ENCODE measurements at regions of chr11 and their contacts with region 1.

Region 1: GRCh38 chr11:35549787-35550186 is 24.4 kb upstream of the PAMR1 start:
- DNase-seq: peak; percentile 69 to 81
- H3K4me3 ChIP-seq: no peak overlapping the region
- H3K27ac ChIP-seq: no peak overlapping the region
- H3K4me1 ChIP-seq: peaks cover 24% of the 10 kb centered on the region
- H3K27me3 ChIP-seq: no peaks in the 10 kb centered on the region
- CTCF ChIP-seq: no peak

Region 2: GRCh38 chr11:35173011-35173511 is 376.7 kb before region 1 on chr11:
- CTCF ChIA-PET with region 1: no interaction called
- POLR2A ChIA-PET with region 1: interaction called, 12 read pairs
- intact Hi-C with region 1: no loop called
- DNase-seq: peak; percentile 60 to 98
- H3K4me3 ChIP-seq: peak overlapping the region; percentile 33
- H3K27ac ChIP-seq: peak overlapping the region; percentile 92
- H3K4me1 ChIP-seq: peaks cover 95% of the 10 kb centered on the region
- H3K27me3 ChIP-seq: no peaks in the 10 kb centered on the region
- CTCF ChIP-seq: no peak

Region 3: GRCh38 chr11:35436581-35437250 is 113.1 kb before region 1 on chr11:
- CTCF ChIA-PET with region 1: no interaction called
- POLR2A ChIA-PET with region 1: no interaction called
- intact Hi-C with region 1: no loop called
- DNase-seq: no peak
- H3K4me3 ChIP-seq: no peak overlapping the region
- H3K27ac ChIP-seq: no peak overlapping the region
- H3K4me1 ChIP-seq: no peaks in the 10 kb centered on the region
- H3K27me3 ChIP-seq: peaks cover 96% of the 10 kb centered on the region
- CTCF ChIP-seq: no peak

Region 4: GRCh38 chr11:35675901-35676610 is 126.3 kb after region 1 on chr11:
- CTCF ChIA-PET with region 1: no interaction called
- POLR2A ChIA-PET with region 1: no interaction called
- intact Hi-C with region 1: no loop called
- DNase-seq: peak in 1 of 2 experiments; percentile 49
- H3K4me3 ChIP-seq: no peak overlapping the region
- H3K27ac ChIP-seq: peak overlapping the region; percentile 10; the same call in 1 of the 2 replicates
- H3K4me1 ChIP-seq: peaks cover 12% of the 10 kb centered on the region; the same call in 1 of the 2 replicates
- H3K27me3 ChIP-seq: no peaks in the 10 kb centered on the region
- CTCF ChIP-seq: no peak

Measured in PC-9 (cell line).